Aorta (tissue), 5 donors: ENCODE measurements at regions of chr14 and their contacts with region 1.

Region 1: GRCh38 chr14:50109342-50109741 is 7.0 kb downstream of the VCPKMT start:
- DNase-seq: no peak
- ATAC-seq: no peak
- H3K4me3 ChIP-seq: no peak overlapping the region
- H3K27ac ChIP-seq: no peak overlapping the region
- H3K4me1 ChIP-seq: no peaks in the 10 kb centered on the region
- H3K27me3 ChIP-seq: no peaks in the 10 kb centered on the region

Region 2: DNA sequence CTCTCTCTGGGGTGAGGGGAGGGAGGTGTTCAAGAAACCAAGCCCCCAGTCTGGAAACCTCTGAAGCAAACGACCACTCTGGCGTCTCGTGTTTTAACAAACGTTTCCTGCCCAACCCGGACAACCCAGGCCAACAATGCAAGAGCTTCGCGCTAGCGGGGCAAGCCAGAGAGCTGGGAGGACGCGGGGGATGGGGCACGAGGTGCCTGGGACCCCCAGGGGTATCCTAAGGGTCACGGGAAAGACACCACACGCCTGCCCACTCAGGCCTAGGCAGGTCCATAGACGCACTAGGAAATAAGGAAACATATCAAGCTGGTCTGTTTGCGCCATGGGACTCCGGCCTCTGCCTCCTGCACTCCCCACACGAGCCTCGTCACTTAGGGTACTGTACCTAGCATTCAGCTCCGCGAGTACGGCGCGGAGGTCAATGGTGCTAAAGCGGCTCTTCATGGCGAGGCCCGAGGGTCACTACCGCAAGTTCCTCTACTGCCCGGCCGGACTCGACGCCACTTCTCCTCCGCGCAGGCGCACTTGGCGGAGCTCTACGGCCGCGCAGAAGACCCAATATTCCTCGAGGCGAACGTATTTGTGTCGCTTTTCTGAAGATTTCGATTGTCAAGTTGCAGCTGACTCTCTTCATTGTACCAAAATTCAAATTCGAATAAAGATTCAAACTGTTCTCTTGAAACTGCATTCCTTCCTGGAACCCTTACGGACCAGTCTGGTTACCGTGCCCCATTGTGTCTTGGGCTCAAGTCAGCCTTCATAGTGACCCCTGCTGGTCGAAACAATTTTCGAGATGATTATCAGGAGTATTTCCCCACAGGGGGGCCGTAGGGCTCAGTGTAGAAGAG is 256.8 kb before region 1 on chr14 and contains the start of gene NEMF:
- intact Hi-C with region 1: loop called in 1 of 2 experiments (anchors 2 kb)
- DNase-seq: peak; percentile 92 to 94
- ATAC-seq: peak; percentile 96
- H3K4me3 ChIP-seq: peak within 1 kb of the TSS; percentile 53 to 71
- H3K27ac ChIP-seq: peak within 1 kb of the TSS in 1 of 2 donors; percentile 45
- H3K4me1 ChIP-seq: no peaks in the 10 kb centered on the region
- H3K27me3 ChIP-seq: no peaks in the 10 kb centered on the region
- total RNA-seq, gene NEMF: 70.7 to 75.8 TPM

Region 3: DNA sequence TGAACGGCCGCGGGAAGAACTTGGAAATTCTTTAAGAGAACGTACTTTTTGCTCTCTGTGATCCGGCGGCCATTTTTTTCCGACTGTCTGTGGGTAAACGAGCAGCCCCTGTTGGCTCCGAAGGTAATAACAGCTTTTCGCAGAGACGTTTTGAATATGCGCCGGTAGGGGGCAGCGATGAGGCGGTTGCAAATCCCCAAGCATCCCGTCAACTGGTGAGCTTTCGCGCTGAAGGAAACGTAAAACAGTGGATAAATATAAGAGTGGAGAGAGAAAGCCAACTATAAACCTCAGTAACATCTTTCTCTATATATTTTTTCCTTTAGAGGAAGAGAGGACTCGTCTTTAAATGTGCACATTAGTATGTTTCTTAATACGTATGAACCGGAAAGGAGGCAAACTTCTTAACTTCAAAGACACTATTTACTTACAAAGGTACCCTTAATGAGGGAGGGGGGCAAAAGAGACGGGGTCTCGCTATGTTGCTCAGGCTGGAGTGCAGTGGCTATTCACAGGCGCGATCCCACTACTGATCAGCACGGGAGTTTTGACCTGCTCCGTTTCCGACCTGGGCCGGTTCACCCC is 247.2 kb before region 1 on chr14:
- intact Hi-C with region 1: loop called (anchors 5 kb)
- DNase-seq: peak; percentile 87 to 93
- ATAC-seq: peak; percentile 94
- H3K4me3 ChIP-seq: peak overlapping the region; percentile 55 to 99
- H3K27ac ChIP-seq: peak overlapping the region; percentile 99 to 100
- H3K4me1 ChIP-seq: no peaks in the 10 kb centered on the region
- H3K27me3 ChIP-seq: no peaks in the 10 kb centered on the region

Region 4: GRCh38 chr14:50249136-50249800 is 139.9 kb after region 1 on chr14:
- intact Hi-C with region 1: no loop called
- DNase-seq: no peak
- ATAC-seq: no peak
- H3K4me3 ChIP-seq: no peak overlapping the region
- H3K27ac ChIP-seq: no peak overlapping the region
- H3K4me1 ChIP-seq: no peaks in the 10 kb centered on the region
- H3K27me3 ChIP-seq: no peaks in the 10 kb centered on the region